Heart right ventricle (tissue), 16 donors: ENCODE measurements at regions of chr6 and their contacts with region 1.

Region 1: GRCh38 chr6:7414811-7415210 is 25.2 kb downstream of the RIOK1 start:
- DNase-seq: no peak
- ATAC-seq: no peak
- H3K4me3 ChIP-seq: no peak overlapping the region
- H3K27ac ChIP-seq: no peak overlapping the region
- H3K4me1 ChIP-seq: no peaks in the 10 kb centered on the region
- H3K27me3 ChIP-seq: no peaks in the 10 kb centered on the region
- CTCF ChIP-seq: no peak

Region 2: GRCh38 chr6:7300926-7301325 is 113.9 kb before region 1 on chr6:
- intact Hi-C with region 1: loop called in 1 of 10 experiments (anchors 10 kb)
- DNase-seq: no peak
- ATAC-seq: no peak
- H3K4me3 ChIP-seq: no peak overlapping the region
- H3K27ac ChIP-seq: no peak overlapping the region
- H3K4me1 ChIP-seq: no peaks in the 10 kb centered on the region
- H3K27me3 ChIP-seq: no peaks in the 10 kb centered on the region
- CTCF ChIP-seq: no peak

Region 3: GRCh38 chr6:7513529-7513928 is 98.7 kb after region 1 on chr6:
- intact Hi-C with region 1: no loop called
- DNase-seq: no peak
- ATAC-seq: no peak
- H3K4me3 ChIP-seq: no peak overlapping the region
- H3K27ac ChIP-seq: no peak overlapping the region
- H3K4me1 ChIP-seq: no peaks in the 10 kb centered on the region
- H3K27me3 ChIP-seq: peaks cover 0 to 10% (median 0%) of the 10 kb centered on the region in 7 donors
- CTCF ChIP-seq: no peak

Region 4: GRCh38 chr6:7604506-7604905 is 189.7 kb after region 1 on chr6:
- intact Hi-C with region 1: loop called in 2 of 10 experiments (anchors 5 to 10 kb)
- DNase-seq: no peak
- ATAC-seq: no peak
- H3K4me3 ChIP-seq: no peak overlapping the region
- H3K27ac ChIP-seq: peak overlapping the region in 4 of 10 donors; percentile 2 to 18 (median 17)
- H3K4me1 ChIP-seq: peaks cover 0 to 13% (median 0%) of the 10 kb centered on the region in 9 donors
- H3K27me3 ChIP-seq: no peaks in the 10 kb centered on the region
- CTCF ChIP-seq: no peak